Common myeloid progenitor, CD34-positive (primary cell): ENCODE measurements at regions of chr9 and their contacts with region 1.

Region 1: DNA sequence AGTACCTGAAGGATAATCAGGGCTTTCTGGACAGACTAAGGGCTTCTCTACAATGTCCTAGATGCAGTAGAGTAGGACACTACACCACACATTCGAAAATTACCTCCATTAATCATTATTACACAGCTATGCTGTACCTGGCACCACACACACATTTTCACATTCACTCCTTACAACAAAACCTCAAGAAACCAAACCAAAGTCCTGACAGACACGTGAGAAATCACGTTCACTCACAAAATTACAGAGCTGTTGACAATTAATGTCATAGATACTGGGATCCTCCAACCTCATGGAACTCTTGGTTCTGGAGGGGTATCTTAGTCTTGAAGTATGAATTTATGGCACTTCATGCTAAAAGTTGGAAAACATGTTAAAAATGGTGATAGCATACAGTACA is 16.3 kb downstream of the UBQLN1 start:
- DNase-seq: no peak
- H3K4me3 ChIP-seq: no peak overlapping the region
- H3K27ac ChIP-seq: no peak overlapping the region
- H3K4me1 ChIP-seq: no peaks in the 10 kb centered on the region
- H3K27me3 ChIP-seq: no peaks in the 10 kb centered on the region

Region 2: GRCh38 chr9:83707768-83708514 is 16.4 kb after region 1 on chr9 and contains the start of gene UBQLN1:
- CTCF ChIA-PET with region 1: interaction called, 13 read pairs
- POLR2A ChIA-PET with region 1: interaction called, 4 read pairs
- DNase-seq: peak; percentile 95 to 97 (median 96)
- H3K4me3 ChIP-seq: peak within 1 kb of the TSS; percentile 85 to 98 (median 92)
- H3K27ac ChIP-seq: peak within 1 kb of the TSS; percentile 97 to 99
- H3K4me1 ChIP-seq: peaks cover 10 to 24% (median 18%) of the 10 kb centered on the region in 4 experiments
- H3K27me3 ChIP-seq: no peaks in the 10 kb centered on the region